ENCODE measurements at regions of chr19 and their contacts with region 1.

Region 1: GRCh38 chr19:11659612-11660011 is 62.3 kb downstream of the ZNF627 start:
- DNase-seq: no peak

Region 2: GRCh38 chr19:11678504-11678903 is 18.9 kb after region 1 on chr19:
- intact Hi-C with region 1: loop called in 1 of 2 experiments (anchors 1 kb)
- DNase-seq: no peak

Region 3: GRCh38 chr19:12205296-12205695 is 545.7 kb after region 1 on chr19:
- intact Hi-C with region 1: loop called in 1 of 2 experiments (anchors 5 kb)
- DNase-seq: no peak

Measured in posterior vena cava (tissue), 2 donors.